ENCODE measurements at regions of chr19 and their contacts with region 1.

Region 1: DNA sequence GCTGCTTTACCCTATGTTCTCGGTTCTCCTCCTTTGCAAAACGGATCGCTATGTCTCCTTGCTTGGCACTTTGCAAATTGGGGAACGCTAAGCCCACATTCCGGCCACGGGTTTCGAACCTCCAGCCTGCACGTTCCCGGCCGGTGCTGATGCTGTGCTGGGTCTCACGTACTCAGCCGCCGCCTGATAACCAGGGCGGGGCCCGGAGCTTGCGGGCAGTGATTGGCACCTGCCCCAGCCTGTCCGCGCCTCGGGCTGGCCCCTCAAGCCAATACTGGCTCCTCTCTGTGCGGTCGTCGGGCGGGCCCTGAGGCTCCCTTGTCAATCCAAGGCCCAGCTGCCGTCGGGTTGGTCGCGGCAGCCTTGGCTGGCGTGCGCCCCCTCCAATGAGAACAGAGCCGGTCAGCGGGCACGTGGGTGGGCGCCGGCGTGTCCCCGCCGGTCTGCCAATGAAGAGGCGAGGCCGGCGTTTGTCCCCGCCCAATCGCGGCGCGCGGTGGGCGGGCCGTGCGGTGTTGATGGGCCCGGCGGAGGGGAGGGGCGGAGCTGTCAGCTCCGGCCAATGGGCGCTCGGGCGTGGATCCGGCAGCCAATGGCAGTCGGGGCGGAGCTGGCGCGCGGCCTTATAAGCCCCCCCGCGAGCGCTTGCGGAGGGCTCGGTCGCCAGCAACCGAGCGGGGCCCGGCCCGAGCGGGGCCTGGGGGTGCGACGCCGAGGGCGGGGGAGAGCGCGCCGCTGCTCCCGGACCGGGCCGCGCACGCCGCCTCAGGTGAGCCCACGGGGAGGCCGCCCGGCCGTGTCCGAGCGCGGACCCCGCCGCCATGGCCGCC is at the start of gene KDM4B:
- DNase-seq: peak; percentile 97 to 100 (median 99)

Region 2: DNA sequence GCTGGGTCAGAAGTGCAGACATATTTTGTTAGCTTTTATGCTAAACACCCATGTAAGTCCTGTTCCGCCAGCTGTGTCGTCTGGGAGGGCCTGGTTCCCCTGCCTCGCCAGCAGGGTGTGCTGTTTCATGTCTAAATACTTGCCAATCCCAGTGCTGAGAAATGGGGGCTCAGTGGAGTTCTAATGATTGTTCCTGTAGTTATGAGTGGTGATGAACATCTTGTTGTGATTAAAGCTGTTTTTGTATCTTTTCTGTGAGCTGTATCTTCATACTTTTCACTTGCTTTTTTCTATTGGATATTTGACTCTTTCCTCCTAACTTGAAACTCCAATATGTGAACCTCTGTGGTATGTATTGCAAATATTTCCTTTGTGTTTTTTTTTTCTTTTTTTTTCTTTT is 32.9 kb after region 1 on chr19:
- intact Hi-C with region 1: no loop called
- DNase-seq: peak in 23 of 42 donors; percentile 18 to 78 (median 41)

Region 3: DNA sequence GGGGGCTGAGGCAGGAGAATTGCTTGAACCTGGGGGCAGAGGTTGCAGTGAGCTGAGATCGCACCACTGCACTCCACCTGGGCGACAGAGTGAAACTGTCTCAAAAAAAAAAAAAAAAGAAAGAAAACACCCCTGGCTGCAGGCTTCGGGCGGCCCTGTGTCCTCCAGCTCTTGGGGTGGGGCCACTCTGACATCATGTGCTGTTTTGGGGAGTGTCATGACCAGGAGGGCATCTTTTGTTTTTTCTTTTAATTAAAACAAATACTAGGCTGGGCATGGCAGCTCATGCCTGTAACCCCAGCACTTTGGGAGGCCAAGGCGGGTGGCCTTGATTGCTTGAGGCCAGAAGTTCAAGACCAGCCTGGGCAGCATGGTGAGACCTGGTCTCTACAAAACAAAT is 52.4 kb after region 1 on chr19:
- intact Hi-C with region 1: no loop called
- DNase-seq: no peak

Region 4: GRCh38 chr19:5031231-5032100 is 62.8 kb after region 1 on chr19:
- intact Hi-C with region 1: loop called (anchors 5 kb)
- DNase-seq: peak; percentile 62 to 96 (median 89)

Region 5: DNA sequence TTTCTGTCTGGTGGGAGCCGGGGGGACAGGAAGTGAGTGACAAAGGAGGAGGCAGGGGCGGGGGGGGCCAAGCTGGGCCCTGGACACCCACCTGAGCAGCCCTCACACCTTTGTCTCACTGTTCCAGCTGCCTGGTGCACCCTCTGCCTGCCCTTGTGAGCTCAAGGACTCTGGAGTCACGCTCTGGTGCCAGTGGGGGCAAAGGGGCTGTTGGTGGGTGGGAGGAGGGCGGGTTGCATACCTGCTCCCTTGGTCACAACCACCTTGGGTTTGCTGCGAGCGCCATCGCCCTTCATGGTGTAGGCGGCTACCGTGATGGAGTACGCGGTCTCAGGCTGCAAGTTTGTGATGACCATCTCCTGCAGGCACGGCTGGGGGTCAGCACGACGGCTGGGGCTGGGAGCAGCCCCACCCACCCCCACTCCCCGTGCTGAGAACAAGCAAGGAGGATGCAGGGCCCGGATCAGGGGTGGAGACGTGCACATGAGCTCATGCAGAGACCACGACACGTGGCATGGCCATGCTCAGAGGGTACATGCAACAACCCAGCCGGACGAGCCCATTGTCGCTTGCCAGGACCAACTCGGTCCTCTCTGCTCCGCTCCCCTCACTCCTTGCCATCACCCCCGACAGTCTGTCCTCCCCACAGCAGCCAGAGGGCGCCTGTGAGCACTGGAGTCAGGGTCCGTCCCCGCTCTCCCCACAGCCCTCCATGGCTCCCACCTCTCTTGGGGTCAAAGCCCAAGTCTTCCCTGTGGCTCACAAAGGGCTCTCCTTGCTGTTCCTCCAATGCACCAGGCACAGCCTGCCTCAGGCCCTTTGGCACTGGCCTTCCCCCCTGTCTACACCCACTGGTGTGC is 257.0 kb after region 1 on chr19:
- intact Hi-C with region 1: no loop called
- DNase-seq: peak in 28 of 42 donors; percentile 9 to 73 (median 38)